Heart left ventricle (tissue), 16 donors: ENCODE measurements at regions of chr12 and their contacts with region 1.

Region 1: GRCh38 chr12:45745861-45746277 is 16.4 kb downstream of the ARID2 start:
- DNase-seq: no peak
- ATAC-seq: peak in 2 of 4 donors; percentile 39 to 53
- H3K4me3 ChIP-seq: no peak overlapping the region
- H3K27ac ChIP-seq: no peak overlapping the region
- H3K4me1 ChIP-seq: peaks cover 0 to 12% (median 0%) of the 10 kb centered on the region in 12 donors
- H3K27me3 ChIP-seq: no peaks in the 10 kb centered on the region
- CTCF ChIP-seq: peak in 11 of 12 donors; percentile 10 to 62 (median 46)
- POLR2A ChIP-seq: no peak

Region 2: DNA sequence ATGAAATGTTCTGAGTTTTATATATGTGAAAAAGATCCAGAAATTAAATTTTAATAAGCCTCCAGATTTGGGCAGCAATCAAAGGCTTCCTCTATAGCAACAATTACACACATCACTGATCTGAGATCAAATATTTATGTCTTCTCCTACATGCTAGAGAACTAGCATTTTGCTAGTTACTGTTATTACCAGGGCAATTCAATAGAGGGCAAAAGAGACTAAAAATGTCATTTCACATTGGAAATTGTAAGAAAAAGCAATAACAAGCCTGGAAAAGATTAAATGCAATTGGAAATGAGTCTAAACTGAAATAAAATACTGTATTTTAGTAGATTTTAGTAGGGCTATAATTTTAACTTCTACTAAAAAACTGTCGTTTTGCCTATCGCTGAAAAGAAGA is 562.6 kb before region 1 on chr12:
- intact Hi-C with region 1: loop called in 1 of 10 experiments (anchors 10 kb)
- DNase-seq: no peak
- ATAC-seq: no peak
- H3K4me3 ChIP-seq: no peak overlapping the region
- H3K27ac ChIP-seq: no peak overlapping the region
- H3K4me1 ChIP-seq: peaks cover 0 to 14% (median 0%) of the 10 kb centered on the region in 12 donors
- H3K27me3 ChIP-seq: no peaks in the 10 kb centered on the region
- CTCF ChIP-seq: peak in 11 of 12 donors; percentile 25 to 65 (median 43)
- POLR2A ChIP-seq: no peak

Region 3: GRCh38 chr12:45409966-45410365 is 335.9 kb before region 1 on chr12:
- intact Hi-C with region 1: loop called in 1 of 10 experiments (anchors 10 kb)
- DNase-seq: peak in 4 of 5 donors; percentile 25 to 61 (median 42)
- ATAC-seq: peak; percentile 69 to 84 (median 75)
- H3K4me3 ChIP-seq: no peak overlapping the region
- H3K27ac ChIP-seq: peak overlapping the region in 7 of 12 donors; percentile 15 to 79 (median 42)
- H3K4me1 ChIP-seq: peaks cover 0 to 40% (median 21%) of the 10 kb centered on the region in 12 donors
- H3K27me3 ChIP-seq: no peaks in the 10 kb centered on the region
- CTCF ChIP-seq: no peak
- POLR2A ChIP-seq: no peak

Region 4: GRCh38 chr12:45789025-45789424 is 43.2 kb after region 1 on chr12:
- intact Hi-C with region 1: no loop called
- DNase-seq: no peak
- ATAC-seq: peak in 1 of 4 donors; percentile 59
- H3K4me3 ChIP-seq: no peak overlapping the region
- H3K27ac ChIP-seq: no peak overlapping the region
- H3K4me1 ChIP-seq: peaks cover 0 to 30% (median 8%) of the 10 kb centered on the region in 12 donors
- H3K27me3 ChIP-seq: no peaks in the 10 kb centered on the region
- CTCF ChIP-seq: no peak
- POLR2A ChIP-seq: no peak

Region 5: GRCh38 chr12:45803652-45804594 is 58.1 kb after region 1 on chr12:
- intact Hi-C with region 1: no loop called
- DNase-seq: no peak
- ATAC-seq: no peak
- H3K4me3 ChIP-seq: no peak overlapping the region
- H3K27ac ChIP-seq: no peak overlapping the region
- H3K4me1 ChIP-seq: peaks cover 0 to 10% (median 2%) of the 10 kb centered on the region in 12 donors
- H3K27me3 ChIP-seq: no peaks in the 10 kb centered on the region
- CTCF ChIP-seq: no peak
- POLR2A ChIP-seq: no peak